Activated CD4-positive, alpha-beta memory T cell treated with anti-CD3 and anti-CD28 coated beads for 36 hours (primary cell): ENCODE measurements at regions of chr22 and their contacts with region 1.

Region 1: DNA sequence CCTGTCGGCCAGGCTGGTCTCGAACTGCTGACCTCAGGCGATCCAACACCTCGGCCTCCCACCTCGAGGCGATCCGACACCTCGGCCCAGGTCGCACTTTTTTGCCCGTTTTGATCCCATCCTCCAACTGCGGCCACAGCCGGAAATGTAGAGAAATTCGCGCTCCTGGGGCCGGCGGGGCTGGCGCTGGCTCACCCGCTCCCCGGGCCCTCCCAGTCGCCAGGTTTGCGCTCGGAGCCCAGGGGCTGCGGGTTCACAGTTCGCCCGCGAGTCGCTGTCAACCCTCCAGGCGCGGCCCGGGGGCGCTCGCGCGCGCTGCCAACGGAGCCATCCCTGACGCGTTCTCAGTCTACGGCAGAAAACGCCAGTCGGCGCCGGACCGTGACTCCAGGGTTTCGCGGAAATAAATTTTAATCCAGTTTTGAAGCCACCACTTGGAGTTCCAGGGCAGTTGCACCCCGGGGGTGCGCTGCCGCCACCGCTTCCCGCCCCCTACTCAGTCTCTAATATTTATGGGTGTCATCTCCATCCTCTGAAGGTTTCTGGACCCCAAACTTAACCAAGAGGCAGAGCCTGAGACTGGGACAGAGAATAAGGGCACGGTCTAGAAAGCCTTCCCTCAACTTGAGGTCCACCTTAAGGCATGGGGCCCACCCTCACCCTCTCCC is 1.5 kb upstream of the KLHDC7B start:
- DNase-seq: peak; percentile 92
- H3K4me3 Mint-ChIP-seq: peak overlapping the region; percentile 59
- H3K27ac Mint-ChIP-seq: peak overlapping the region; percentile 76
- H3K4me1 Mint-ChIP-seq: peaks cover 57% of the 10 kb centered on the region
- H3K27me3 Mint-ChIP-seq: no peaks in the 10 kb centered on the region

Region 2: DNA sequence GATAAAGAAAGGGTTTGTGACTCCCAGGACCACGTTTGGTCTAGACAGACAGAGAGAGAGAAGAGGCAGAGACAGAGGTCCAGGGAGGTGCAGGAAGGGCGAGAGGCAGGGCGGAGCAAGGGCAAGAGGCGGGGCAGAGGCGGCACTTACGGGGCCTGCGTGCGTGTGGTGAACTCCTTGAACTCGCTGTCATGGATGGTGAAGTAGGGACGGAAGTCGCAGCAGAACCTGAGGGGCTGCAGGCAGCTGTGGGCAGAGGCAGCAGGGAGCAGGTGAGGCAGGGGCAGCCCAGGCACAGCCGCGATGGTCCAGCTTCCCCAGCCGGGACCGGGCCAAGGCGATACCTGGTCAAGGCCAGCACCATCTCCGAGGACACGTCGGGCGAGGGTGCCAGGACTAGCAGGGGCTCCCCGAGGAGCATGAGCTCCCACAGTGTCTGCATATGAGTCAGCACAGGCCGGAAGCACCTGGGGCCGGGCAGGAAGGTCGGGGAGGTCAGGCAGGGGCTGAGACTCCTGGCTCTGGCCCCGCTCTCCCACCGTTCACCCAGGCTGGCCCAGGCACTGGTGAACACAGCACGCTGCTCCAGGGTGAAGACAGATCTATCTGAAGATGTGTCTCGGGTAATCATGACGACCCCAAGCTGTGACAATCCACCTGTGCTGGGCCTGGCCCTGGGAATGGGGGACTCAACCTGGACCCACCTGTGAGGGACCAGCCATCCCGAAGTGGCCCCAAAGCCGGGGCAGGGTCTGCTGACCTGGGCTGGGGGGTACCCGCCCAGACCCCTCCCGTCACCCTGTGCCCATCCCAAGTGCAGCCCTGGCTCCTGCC is 229.5 kb before region 1 on chr22:
- CTCF ChIA-PET with region 1: no interaction called
- POLR2A ChIA-PET with region 1: no interaction called
- intact Hi-C with region 1: no loop called
- DNase-seq: peak; percentile 89
- H3K4me3 Mint-ChIP-seq: peak overlapping the region; percentile 73
- H3K27ac Mint-ChIP-seq: peak overlapping the region; percentile 75
- H3K4me1 Mint-ChIP-seq: peaks cover 11% of the 10 kb centered on the region
- H3K27me3 Mint-ChIP-seq: no peaks in the 10 kb centered on the region

Region 3: GRCh38 chr22:50556703-50557102 is 12.5 kb after region 1 on chr22:
- CTCF ChIA-PET with region 1: interaction called, 11 read pairs
- POLR2A ChIA-PET with region 1: interaction called, 5 read pairs
- intact Hi-C with region 1: no loop called
- DNase-seq: no peak
- H3K4me3 Mint-ChIP-seq: no peak overlapping the region
- H3K27ac Mint-ChIP-seq: no peak overlapping the region
- H3K4me1 Mint-ChIP-seq: peaks cover 3% of the 10 kb centered on the region
- H3K27me3 Mint-ChIP-seq: no peaks in the 10 kb centered on the region